ENCODE measurements at regions of chr11 and their contacts with region 1.

Region 1: GRCh38 chr11:73141848-73142286 is 251 bp downstream of the FCHSD2 start:
- DNase-seq: peak; percentile 87
- ATAC-seq: peak; percentile 26
- H3K4me3 ChIP-seq: peak overlapping the region; percentile 84 to 98 (median 95)
- H3K4me3 Mint-ChIP-seq: peak overlapping the region; percentile 100
- H3K27ac ChIP-seq: peak overlapping the region; percentile 89 to 93
- H3K27ac Mint-ChIP-seq: peak overlapping the region; percentile 99
- H3K4me1 ChIP-seq: peaks cover 65 to 71% of the 10 kb centered on the region in 2 donors
- H3K4me1 Mint-ChIP-seq: peaks cover 76% of the 10 kb centered on the region
- H3K27me3 ChIP-seq: no peaks in the 10 kb centered on the region
- H3K27me3 Mint-ChIP-seq: no peaks in the 10 kb centered on the region
- CTCF ChIP-seq: no peak

Region 2: DNA sequence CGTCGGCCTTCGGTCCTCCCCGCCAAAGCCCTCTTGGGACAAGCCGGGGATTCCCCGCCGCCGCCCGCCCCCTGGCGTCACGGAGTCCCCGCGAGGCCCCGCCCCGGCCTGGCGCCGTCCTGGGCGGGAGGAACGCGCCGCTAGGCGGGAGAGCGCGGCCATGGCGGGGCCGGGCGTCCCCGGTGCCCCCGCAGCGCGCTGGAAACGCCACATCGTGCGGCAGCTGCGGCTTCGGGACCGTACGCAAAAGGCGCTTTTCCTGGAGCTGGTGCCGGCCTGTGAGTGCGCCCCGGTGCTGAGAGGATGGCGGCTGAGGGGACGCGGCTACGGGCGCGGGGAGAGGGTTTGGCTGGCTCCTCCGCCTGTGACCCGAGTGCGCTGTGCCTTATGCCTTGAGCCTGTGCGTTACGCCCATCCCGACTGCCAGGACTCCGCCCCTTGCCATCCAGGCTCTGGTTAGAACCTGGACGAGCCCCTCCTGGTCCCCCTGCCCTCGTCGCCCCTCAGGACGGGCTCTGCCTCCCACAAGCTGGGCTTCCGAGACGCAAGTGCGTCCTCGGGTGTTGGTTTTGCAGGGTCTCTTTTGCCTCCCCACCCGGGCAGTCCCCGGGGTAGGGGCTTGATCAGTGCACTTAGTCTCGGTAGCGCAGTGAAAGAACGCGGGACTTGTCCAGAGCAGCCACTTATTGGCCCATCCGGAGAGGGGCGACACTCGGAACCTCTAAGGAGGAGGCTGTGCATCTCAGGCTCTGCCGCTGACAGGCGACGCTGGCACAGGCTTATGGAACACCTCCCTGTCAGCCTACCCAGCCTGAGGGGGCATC is 327.4 kb before region 1 on chr11 and contains the start of gene ATG16L2:
- CTCF ChIA-PET with region 1: interaction called, 4 read pairs
- POLR2A ChIA-PET with region 1: interaction called, 5 read pairs
- intact Hi-C with region 1: loop called (anchors 1 kb)
- DNase-seq: no peak
- ATAC-seq: peak; percentile 80
- H3K4me3 ChIP-seq: peak within 1 kb of the TSS; percentile 94 to 99 (median 98)
- H3K4me3 Mint-ChIP-seq: peak within 1 kb of the TSS; percentile 99
- H3K27ac ChIP-seq: peak within 1 kb of the TSS; percentile 95 to 98
- H3K27ac Mint-ChIP-seq: peak within 1 kb of the TSS; percentile 98
- H3K4me1 ChIP-seq: peaks cover 18 to 36% of the 10 kb centered on the region in 2 donors
- H3K4me1 Mint-ChIP-seq: peaks cover 45% of the 10 kb centered on the region
- H3K27me3 ChIP-seq: no peaks in the 10 kb centered on the region
- H3K27me3 Mint-ChIP-seq: no peaks in the 10 kb centered on the region
- CTCF ChIP-seq: peak; percentile 34
- total RNA-seq, gene ATG16L2: 212 and 228 TPM in 2 replicates

Region 3: GRCh38 chr11:72924568-72925190 is 217.2 kb before region 1 on chr11:
- CTCF ChIA-PET with region 1: interaction called, 16 read pairs
- POLR2A ChIA-PET with region 1: interaction called, 8 read pairs
- intact Hi-C with region 1: loop called (anchors 2 kb)
- DNase-seq: peak; percentile 53
- ATAC-seq: peak; percentile 54
- H3K4me3 ChIP-seq: no peak overlapping the region
- H3K4me3 Mint-ChIP-seq: no peak overlapping the region
- H3K27ac ChIP-seq: peak overlapping the region in 1 of 2 donors; percentile 72
- H3K27ac Mint-ChIP-seq: peak overlapping the region; percentile 73
- H3K4me1 ChIP-seq: peaks cover 14 to 18% of the 10 kb centered on the region in 2 donors
- H3K4me1 Mint-ChIP-seq: peaks cover 43% of the 10 kb centered on the region
- H3K27me3 ChIP-seq: no peaks in the 10 kb centered on the region
- H3K27me3 Mint-ChIP-seq: no peaks in the 10 kb centered on the region
- CTCF ChIP-seq: peak; percentile 70

Region 4: GRCh38 chr11:73001615-73002014 is 140.3 kb before region 1 on chr11:
- CTCF ChIA-PET with region 1: interaction called, 3 read pairs
- POLR2A ChIA-PET with region 1: interaction called, 3 read pairs
- intact Hi-C with region 1: loop called (anchors 2 kb)
- DNase-seq: no peak
- ATAC-seq: no peak
- H3K4me3 ChIP-seq: peak overlapping the region in 1 of 5 experiments; percentile 5
- H3K4me3 Mint-ChIP-seq: no peak overlapping the region
- H3K27ac ChIP-seq: peak overlapping the region; percentile 86 to 87
- H3K27ac Mint-ChIP-seq: peak overlapping the region; percentile 75
- H3K4me1 ChIP-seq: peaks cover 66 to 70% of the 10 kb centered on the region in 2 donors
- H3K4me1 Mint-ChIP-seq: peaks cover 70% of the 10 kb centered on the region
- H3K27me3 ChIP-seq: no peaks in the 10 kb centered on the region
- H3K27me3 Mint-ChIP-seq: no peaks in the 10 kb centered on the region
- CTCF ChIP-seq: no peak

Region 5: GRCh38 chr11:73047773-73048371 is 94.0 kb before region 1 on chr11:
- CTCF ChIA-PET with region 1: interaction called, 7 read pairs
- POLR2A ChIA-PET with region 1: interaction called, 3 read pairs
- intact Hi-C with region 1: loop called (anchors 2 kb)
- DNase-seq: peak; percentile 80
- ATAC-seq: peak; percentile 91
- H3K4me3 ChIP-seq: peak overlapping the region; percentile 14 to 52 (median 32)
- H3K4me3 Mint-ChIP-seq: peak overlapping the region; percentile 79
- H3K27ac ChIP-seq: peak overlapping the region; percentile 81 to 89
- H3K27ac Mint-ChIP-seq: peak overlapping the region; percentile 88
- H3K4me1 ChIP-seq: peaks cover 68 to 80% of the 10 kb centered on the region in 2 donors
- H3K4me1 Mint-ChIP-seq: peaks cover 66% of the 10 kb centered on the region
- H3K27me3 ChIP-seq: no peaks in the 10 kb centered on the region
- H3K27me3 Mint-ChIP-seq: no peaks in the 10 kb centered on the region
- CTCF ChIP-seq: no peak

Region 6: DNA sequence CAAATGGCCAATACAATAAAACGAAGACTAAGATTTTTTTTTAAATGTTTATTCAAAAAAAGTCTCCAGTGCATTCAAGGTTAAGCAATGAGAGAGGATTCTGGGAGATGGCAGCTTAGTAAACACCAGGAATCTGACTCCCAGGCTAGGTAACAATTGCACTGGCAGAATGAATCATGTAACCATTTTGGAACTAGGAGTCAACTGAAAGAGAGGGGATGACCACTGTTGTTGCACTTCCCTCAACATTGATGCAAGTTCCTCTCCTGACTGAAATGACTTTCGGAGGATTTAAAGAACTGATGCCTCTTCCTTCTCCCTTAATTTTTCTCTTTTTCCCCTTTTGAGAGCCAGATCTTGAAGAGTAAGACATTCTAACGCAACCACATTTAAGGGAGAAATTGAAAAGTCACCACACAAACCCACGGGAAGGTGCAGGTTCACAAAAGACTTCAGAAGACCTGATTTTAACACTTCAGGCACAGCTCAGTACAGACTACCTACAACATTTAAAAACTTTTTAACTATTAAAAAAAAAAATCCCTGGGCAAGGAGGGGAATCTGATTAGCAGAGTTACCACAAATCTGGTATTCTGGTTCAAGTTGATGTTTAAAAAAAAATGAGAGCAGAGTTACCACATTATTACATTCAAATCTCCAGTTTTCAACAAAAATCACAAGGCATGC is 56.5 kb before region 1 on chr11:
- CTCF ChIA-PET with region 1: interaction called, 4 read pairs
- POLR2A ChIA-PET with region 1: interaction called, 10 read pairs
- intact Hi-C with region 1: no loop called
- DNase-seq: peak; percentile 37
- ATAC-seq: peak; percentile 25
- H3K4me3 ChIP-seq: no peak overlapping the region
- H3K4me3 Mint-ChIP-seq: peak overlapping the region; percentile 44
- H3K27ac ChIP-seq: peak overlapping the region; percentile 42 to 79
- H3K27ac Mint-ChIP-seq: peak overlapping the region; percentile 70
- H3K4me1 ChIP-seq: peaks cover 24 to 38% of the 10 kb centered on the region in 2 donors
- H3K4me1 Mint-ChIP-seq: peaks cover 46% of the 10 kb centered on the region
- H3K27me3 ChIP-seq: no peaks in the 10 kb centered on the region
- H3K27me3 Mint-ChIP-seq: no peaks in the 10 kb centered on the region
- CTCF ChIP-seq: no peak

Region 7: DNA sequence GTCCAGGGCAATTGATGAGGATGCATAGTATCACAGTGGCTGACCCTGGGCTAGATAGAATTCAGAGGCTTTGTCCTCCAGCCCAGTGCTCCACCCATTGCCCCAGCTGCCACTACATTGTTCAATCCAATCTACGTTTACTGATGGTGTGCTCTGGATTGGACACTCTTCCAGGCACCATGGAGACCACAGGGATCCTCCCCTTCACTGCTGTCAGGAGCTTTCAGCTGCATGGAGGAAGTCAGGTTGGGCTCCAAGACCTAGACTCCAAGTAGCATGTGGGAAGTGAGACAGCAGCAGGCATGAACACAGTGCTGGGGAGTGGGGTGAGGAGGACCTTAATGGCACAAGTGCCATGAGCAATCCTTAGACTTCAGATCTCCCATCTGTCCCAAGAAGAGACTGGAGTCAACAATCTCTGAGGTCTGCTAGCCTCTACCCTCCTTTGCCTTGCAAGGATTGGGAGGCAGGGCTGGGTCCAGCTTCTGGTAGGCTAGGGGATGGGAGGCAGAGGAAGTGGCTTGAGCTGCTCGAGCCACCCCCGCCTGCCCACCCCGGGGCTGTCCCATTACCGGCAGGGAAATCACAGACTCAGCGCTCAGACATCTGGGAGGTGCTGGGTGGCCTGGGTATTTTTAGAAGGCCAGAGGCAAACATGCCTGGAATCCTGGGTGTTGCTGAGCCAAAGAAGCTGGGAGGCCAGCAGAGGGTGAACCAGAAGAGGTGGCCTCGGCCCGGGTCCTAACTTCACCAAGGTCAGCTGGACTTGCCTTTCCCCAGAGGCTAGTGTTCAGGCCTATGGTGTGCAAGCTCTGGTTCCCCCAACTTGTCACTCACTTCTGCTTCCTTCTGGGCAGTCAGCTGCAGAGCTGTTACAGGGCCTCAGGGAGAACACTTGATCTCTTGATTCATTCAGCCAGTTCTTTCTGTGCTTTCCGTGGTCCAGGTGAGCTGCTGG is 15.5 kb after region 1 on chr11:
- CTCF ChIA-PET with region 1: interaction called, 102 read pairs
- POLR2A ChIA-PET with region 1: interaction called, 98 read pairs
- intact Hi-C with region 1: loop called (anchors 1 kb)
- DNase-seq: peak; percentile 74
- ATAC-seq: peak; percentile 36
- H3K4me3 ChIP-seq: peak overlapping the region in 3 of 5 experiments; percentile 12 to 30 (median 17)
- H3K4me3 Mint-ChIP-seq: peak overlapping the region; percentile 77
- H3K27ac ChIP-seq: peak overlapping the region; percentile 86 to 94
- H3K27ac Mint-ChIP-seq: peak overlapping the region; percentile 95
- H3K4me1 ChIP-seq: peaks cover 91 to 94% of the 10 kb centered on the region in 2 donors
- H3K4me1 Mint-ChIP-seq: peaks cover 93% of the 10 kb centered on the region
- H3K27me3 ChIP-seq: no peaks in the 10 kb centered on the region
- H3K27me3 Mint-ChIP-seq: no peaks in the 10 kb centered on the region
- CTCF ChIP-seq: no peak

Measured in B cell (primary cell).